B cell (primary cell): ENCODE measurements at regions of chr9 and their contacts with region 1.

Region 1: GRCh38 chr9:5186416-5187169 is 1.2 kb upstream of the INSL6 start:
- DNase-seq: peak; percentile 74
- ATAC-seq: peak; percentile 79
- H3K4me3 ChIP-seq: no peak overlapping the region
- H3K4me3 Mint-ChIP-seq: no peak overlapping the region
- H3K27ac ChIP-seq: no peak overlapping the region
- H3K27ac Mint-ChIP-seq: no peak overlapping the region
- H3K4me1 ChIP-seq: no peaks in the 10 kb centered on the region
- H3K4me1 Mint-ChIP-seq: peaks cover 2% of the 10 kb centered on the region
- H3K27me3 ChIP-seq: no peaks in the 10 kb centered on the region
- H3K27me3 Mint-ChIP-seq: no peaks in the 10 kb centered on the region
- CTCF ChIP-seq: peak; percentile 78

Region 2: DNA sequence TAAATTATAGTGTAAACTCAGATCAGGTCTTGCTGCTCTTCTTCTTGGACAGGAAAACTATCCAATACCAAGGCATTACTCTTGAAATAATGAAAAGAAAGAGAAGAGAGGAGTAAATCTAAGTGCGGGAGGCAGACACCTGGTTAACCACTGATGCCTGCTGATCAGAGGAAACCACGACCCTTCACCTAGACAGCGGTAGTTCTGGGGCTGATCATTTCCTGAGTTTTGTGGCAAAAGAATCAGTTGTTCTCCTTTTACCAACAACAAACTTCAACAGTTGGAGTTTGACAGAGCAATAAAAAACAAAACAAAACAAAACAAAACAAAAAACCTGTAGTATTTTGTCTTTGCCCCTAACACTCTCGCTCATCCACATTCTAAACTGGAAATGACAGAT is 150.1 kb after region 1 on chr9:
- CTCF ChIA-PET with region 1: no interaction called
- POLR2A ChIA-PET with region 1: no interaction called
- intact Hi-C with region 1: no loop called
- DNase-seq: peak; percentile 16
- ATAC-seq: no peak
- H3K4me3 ChIP-seq: no peak overlapping the region
- H3K4me3 Mint-ChIP-seq: no peak overlapping the region
- H3K27ac ChIP-seq: no peak overlapping the region
- H3K27ac Mint-ChIP-seq: no peak overlapping the region
- H3K4me1 ChIP-seq: peaks cover 7 to 9% of the 10 kb centered on the region in 2 donors
- H3K4me1 Mint-ChIP-seq: peaks cover 6% of the 10 kb centered on the region
- H3K27me3 ChIP-seq: no peaks in the 10 kb centered on the region
- H3K27me3 Mint-ChIP-seq: no peaks in the 10 kb centered on the region
- CTCF ChIP-seq: no peak

Region 3: DNA sequence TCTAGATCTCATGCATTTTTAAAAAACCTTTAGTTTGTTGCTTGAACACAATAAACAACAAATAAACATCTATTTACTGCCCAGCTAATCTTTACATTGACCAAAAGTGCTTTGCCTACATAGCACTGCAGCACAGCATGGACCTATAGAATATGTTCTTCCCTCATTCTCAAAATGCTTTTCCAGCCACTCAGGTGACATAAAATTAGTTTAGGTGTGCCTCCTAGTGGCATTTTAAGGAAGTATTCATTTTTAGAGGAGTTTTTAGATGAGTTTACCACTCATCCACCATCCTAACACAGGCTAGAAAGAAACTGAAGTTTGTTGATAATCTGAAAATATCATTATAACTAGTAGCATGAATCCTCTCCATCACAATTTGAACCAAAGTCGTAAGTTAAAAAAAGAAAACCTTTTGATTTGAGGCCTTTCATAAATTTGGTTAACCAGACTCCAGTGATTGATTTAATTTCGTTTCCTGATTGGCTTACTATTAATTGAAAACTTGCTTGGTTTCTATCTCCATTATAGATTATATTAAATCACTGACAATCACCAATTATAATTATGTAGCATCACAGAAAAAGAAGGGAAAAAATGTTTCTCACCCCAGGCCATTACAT is 238.5 kb after region 1 on chr9:
- CTCF ChIA-PET with region 1: interaction called, 13 read pairs
- POLR2A ChIA-PET with region 1: no interaction called
- intact Hi-C with region 1: no loop called
- DNase-seq: peak; percentile 51
- ATAC-seq: peak; percentile 24
- H3K4me3 ChIP-seq: no peak overlapping the region
- H3K4me3 Mint-ChIP-seq: no peak overlapping the region
- H3K27ac ChIP-seq: no peak overlapping the region
- H3K27ac Mint-ChIP-seq: no peak overlapping the region
- H3K4me1 ChIP-seq: no peaks in the 10 kb centered on the region
- H3K4me1 Mint-ChIP-seq: peaks cover 1% of the 10 kb centered on the region
- H3K27me3 ChIP-seq: no peaks in the 10 kb centered on the region
- H3K27me3 Mint-ChIP-seq: no peaks in the 10 kb centered on the region
- CTCF ChIP-seq: peak; percentile 76

Region 4: GRCh38 chr9:5582835-5583195 is 396.2 kb after region 1 on chr9:
- CTCF ChIA-PET with region 1: interaction called, 69 read pairs
- POLR2A ChIA-PET with region 1: no interaction called
- intact Hi-C with region 1: no loop called
- DNase-seq: peak; percentile 85
- ATAC-seq: peak; percentile 76
- H3K4me3 ChIP-seq: no peak overlapping the region
- H3K4me3 Mint-ChIP-seq: peak overlapping the region; percentile 67
- H3K27ac ChIP-seq: peak overlapping the region; percentile 53 to 75
- H3K27ac Mint-ChIP-seq: peak overlapping the region; percentile 92
- H3K4me1 ChIP-seq: peaks cover 25% of the 10 kb centered on the region in 2 donors
- H3K4me1 Mint-ChIP-seq: peaks cover 60% of the 10 kb centered on the region
- H3K27me3 ChIP-seq: no peaks in the 10 kb centered on the region
- H3K27me3 Mint-ChIP-seq: no peaks in the 10 kb centered on the region
- CTCF ChIP-seq: no peak

Region 5: GRCh38 chr9:5714501-5715401 is 528.2 kb after region 1 on chr9:
- CTCF ChIA-PET with region 1: interaction called, 5 read pairs
- POLR2A ChIA-PET with region 1: no interaction called
- intact Hi-C with region 1: loop called (anchors 1 kb)
- DNase-seq: peak; percentile 22
- ATAC-seq: no peak
- H3K4me3 ChIP-seq: no peak overlapping the region
- H3K4me3 Mint-ChIP-seq: no peak overlapping the region
- H3K27ac ChIP-seq: no peak overlapping the region
- H3K27ac Mint-ChIP-seq: no peak overlapping the region
- H3K4me1 ChIP-seq: peaks cover 3 to 7% of the 10 kb centered on the region in 2 donors
- H3K4me1 Mint-ChIP-seq: peaks cover 13% of the 10 kb centered on the region
- H3K27me3 ChIP-seq: no peaks in the 10 kb centered on the region
- H3K27me3 Mint-ChIP-seq: no peaks in the 10 kb centered on the region
- CTCF ChIP-seq: peak; percentile 46

Region 6: GRCh38 chr9:5773324-5773999 is 586.9 kb after region 1 on chr9:
- CTCF ChIA-PET with region 1: interaction called, 11 read pairs
- POLR2A ChIA-PET with region 1: no interaction called
- intact Hi-C with region 1: loop called (anchors 10 kb)
- DNase-seq: no peak
- ATAC-seq: no peak
- H3K4me3 ChIP-seq: no peak overlapping the region
- H3K4me3 Mint-ChIP-seq: no peak overlapping the region
- H3K27ac ChIP-seq: no peak overlapping the region
- H3K27ac Mint-ChIP-seq: peak overlapping the region; percentile 56
- H3K4me1 ChIP-seq: no peaks in the 10 kb centered on the region
- H3K4me1 Mint-ChIP-seq: no peaks in the 10 kb centered on the region
- H3K27me3 ChIP-seq: no peaks in the 10 kb centered on the region
- H3K27me3 Mint-ChIP-seq: no peaks in the 10 kb centered on the region
- CTCF ChIP-seq: peak; percentile 21

Region 7: GRCh38 chr9:6055213-6055612 is 868.6 kb after region 1 on chr9:
- CTCF ChIA-PET with region 1: no interaction called
- POLR2A ChIA-PET with region 1: no interaction called
- intact Hi-C with region 1: loop called (anchors 10 kb)
- DNase-seq: peak; percentile 73
- ATAC-seq: peak; percentile 34
- H3K4me3 ChIP-seq: no peak overlapping the region
- H3K4me3 Mint-ChIP-seq: no peak overlapping the region
- H3K27ac ChIP-seq: no peak overlapping the region
- H3K27ac Mint-ChIP-seq: no peak overlapping the region
- H3K4me1 ChIP-seq: peaks cover 11 to 20% of the 10 kb centered on the region in 2 donors
- H3K4me1 Mint-ChIP-seq: peaks cover 18% of the 10 kb centered on the region
- H3K27me3 ChIP-seq: no peaks in the 10 kb centered on the region
- H3K27me3 Mint-ChIP-seq: no peaks in the 10 kb centered on the region
- CTCF ChIP-seq: peak; percentile 37

Region 8: GRCh38 chr9:6355728-6356127 is 1169.1 kb after region 1 on chr9:
- CTCF ChIA-PET with region 1: no interaction called
- POLR2A ChIA-PET with region 1: no interaction called
- intact Hi-C with region 1: no loop called
- DNase-seq: no peak
- ATAC-seq: no peak
- H3K4me3 ChIP-seq: no peak overlapping the region
- H3K4me3 Mint-ChIP-seq: no peak overlapping the region
- H3K27ac ChIP-seq: no peak overlapping the region
- H3K27ac Mint-ChIP-seq: no peak overlapping the region
- H3K4me1 ChIP-seq: peaks cover 0 to 4% of the 10 kb centered on the region in 2 donors
- H3K4me1 Mint-ChIP-seq: peaks cover 6% of the 10 kb centered on the region
- H3K27me3 ChIP-seq: no peaks in the 10 kb centered on the region
- H3K27me3 Mint-ChIP-seq: peaks cover 8% of the 10 kb centered on the region
- CTCF ChIP-seq: no peak